ENCODE measurements at regions of chr2 and their contacts with region 1.

Region 1: GRCh38 chr2:63424329-63425078 is 163.8 kb downstream of the WDPCP start:
- DNase-seq: peak; percentile 85
- ATAC-seq: peak; percentile 93
- H3K4me3 ChIP-seq: no peak overlapping the region
- H3K27ac ChIP-seq: no peak overlapping the region
- H3K4me1 ChIP-seq: no peaks in the 10 kb centered on the region
- H3K27me3 ChIP-seq: no peaks in the 10 kb centered on the region
- CTCF ChIP-seq: peak; percentile 86

Region 2: DNA sequence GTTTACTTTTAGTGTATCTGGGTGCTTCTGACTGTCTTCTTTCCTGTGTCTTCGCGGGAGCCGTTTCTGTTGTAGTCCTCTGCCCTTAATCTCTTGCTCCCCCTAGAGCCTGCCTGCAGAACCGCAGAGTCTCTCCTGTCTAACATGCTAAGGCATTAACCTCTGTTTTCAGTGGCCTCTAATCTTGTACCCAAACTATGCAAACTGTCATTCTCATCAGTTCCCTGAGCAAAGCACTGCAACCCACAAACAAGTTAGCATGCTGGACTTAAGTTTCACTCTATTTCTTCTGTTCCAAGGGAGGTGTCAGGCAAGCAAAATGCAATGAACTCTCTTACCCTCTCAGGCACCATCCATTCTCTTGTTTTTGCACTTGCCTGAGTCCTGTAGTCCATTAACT is 235.5 kb before region 1 on chr2:
- CTCF ChIA-PET with region 1: no interaction called
- POLR2A ChIA-PET with region 1: no interaction called
- intact Hi-C with region 1: loop called (anchors 10 kb)
- DNase-seq: peak; percentile 68
- ATAC-seq: peak; percentile 60
- H3K4me3 ChIP-seq: peak overlapping the region; percentile 31
- H3K27ac ChIP-seq: no peak overlapping the region
- H3K4me1 ChIP-seq: no peaks in the 10 kb centered on the region
- H3K27me3 ChIP-seq: no peaks in the 10 kb centered on the region
- CTCF ChIP-seq: peak; percentile 85

Measured in PC-3 (cell line).